Caco-2 (cell line): ENCODE measurements at regions of chr5 and their contacts with region 1.

Region 1: DNA sequence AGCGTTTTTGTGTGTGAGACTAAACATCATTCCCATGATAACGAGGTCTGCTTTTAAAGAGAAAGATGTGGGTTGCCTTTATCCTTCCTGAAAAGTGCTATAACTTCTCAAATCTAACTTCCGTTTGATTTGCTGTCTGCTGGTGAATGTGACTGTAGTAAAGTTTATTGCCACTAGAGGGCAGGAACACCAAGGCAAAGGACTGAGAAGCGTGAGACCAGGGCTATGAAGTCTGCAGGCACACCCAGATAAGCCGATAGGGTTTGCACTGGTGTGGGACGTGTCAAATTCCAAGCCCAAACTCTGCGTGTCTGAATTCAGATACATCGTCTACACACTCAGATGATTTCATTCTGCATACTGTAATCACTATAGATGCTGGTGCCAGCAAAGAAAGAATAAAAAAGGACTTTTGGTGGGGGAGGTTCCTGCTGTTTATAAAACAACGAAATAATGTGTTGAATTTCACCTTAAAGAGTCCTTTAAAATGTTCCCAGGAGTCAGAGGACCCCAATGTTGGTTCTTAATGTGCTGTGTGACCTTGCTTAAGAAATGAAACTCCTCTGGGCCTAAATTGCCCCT is 87.2 kb downstream of the PTTG1 start:
- DNase-seq: peak; percentile 75 to 82
- H3K4me3 ChIP-seq: no peak overlapping the region
- H3K4me3 Mint-ChIP-seq: no peak overlapping the region
- H3K27ac Mint-ChIP-seq: no peak overlapping the region
- H3K4me1 ChIP-seq: no peaks in the 10 kb centered on the region
- H3K4me1 Mint-ChIP-seq: no peaks in the 10 kb centered on the region
- H3K27me3 ChIP-seq: no peaks in the 10 kb centered on the region
- H3K27me3 Mint-ChIP-seq: peaks cover 3% of the 10 kb centered on the region
- CTCF ChIP-seq: peak; percentile 78 to 90

Region 2: DNA sequence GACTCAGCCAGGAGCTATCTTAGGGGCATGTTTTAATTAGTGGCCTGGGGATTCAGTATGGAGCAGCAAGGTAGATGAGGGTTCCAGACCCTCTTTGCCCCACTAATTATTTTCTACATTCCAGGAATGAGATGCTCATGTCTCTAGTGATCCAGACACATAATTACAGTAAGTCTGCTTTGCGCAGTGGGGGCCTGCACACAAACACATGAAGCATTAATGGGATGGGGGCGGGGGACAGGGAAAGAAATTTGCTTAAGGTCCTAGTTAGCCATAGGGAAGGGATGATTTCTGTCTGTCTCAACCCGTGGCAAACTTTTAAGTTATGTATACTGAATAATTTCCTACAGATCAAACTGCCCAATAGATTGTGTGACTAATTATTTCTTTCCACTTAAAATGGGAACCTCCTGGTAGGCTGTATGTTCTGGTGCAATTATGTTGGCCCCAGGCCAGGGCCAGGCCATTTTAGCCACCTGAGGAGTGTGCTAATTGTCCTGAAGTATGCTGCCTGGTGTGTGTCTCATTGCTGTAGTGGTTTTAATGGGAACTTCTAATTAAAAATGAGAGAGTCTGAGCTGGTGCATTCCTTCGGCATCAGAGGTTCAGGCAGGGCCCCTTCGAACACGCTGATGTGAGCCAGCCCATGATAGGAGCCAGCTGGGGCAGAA is 47.2 kb after region 1 on chr5:
- CTCF ChIA-PET with region 1: no interaction called
- POLR2A ChIA-PET with region 1: no interaction called
- intact Hi-C with region 1: loop called (anchors 2 kb)
- DNase-seq: no peak
- H3K4me3 ChIP-seq: no peak overlapping the region
- H3K4me3 Mint-ChIP-seq: no peak overlapping the region
- H3K27ac Mint-ChIP-seq: no peak overlapping the region
- H3K4me1 ChIP-seq: peaks cover 13% of the 10 kb centered on the region
- H3K4me1 Mint-ChIP-seq: peaks cover 8% of the 10 kb centered on the region
- H3K27me3 ChIP-seq: no peaks in the 10 kb centered on the region
- H3K27me3 Mint-ChIP-seq: no peaks in the 10 kb centered on the region
- CTCF ChIP-seq: no peak

Region 3: DNA sequence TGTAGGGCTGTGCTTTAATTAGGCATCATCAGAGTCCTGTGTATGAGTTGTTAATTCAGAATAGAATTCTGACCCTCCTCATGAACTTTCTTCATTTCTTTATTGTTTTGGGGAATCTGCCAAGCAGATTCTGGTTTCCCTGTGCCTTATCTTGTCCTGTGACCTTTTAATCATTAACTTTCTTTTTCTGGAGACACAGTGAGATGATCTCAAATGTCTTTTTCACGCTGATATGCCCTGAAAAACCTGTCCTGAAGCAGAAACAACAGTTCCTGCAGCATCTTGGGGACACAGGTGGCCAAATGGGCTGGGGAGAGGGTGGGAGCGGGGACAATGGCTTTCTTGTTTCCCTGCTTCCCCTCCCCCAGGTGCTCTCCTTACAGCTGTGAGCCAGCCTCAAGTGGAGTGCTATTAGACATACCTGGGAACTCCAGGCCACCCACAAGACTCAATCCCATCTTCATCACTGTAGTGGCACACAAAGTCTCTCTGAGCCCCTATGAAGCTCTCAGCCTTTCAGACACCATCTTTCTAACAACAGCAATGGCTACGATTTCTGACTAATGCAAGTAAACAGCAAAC is 129.4 kb after region 1 on chr5:
- CTCF ChIA-PET with region 1: no interaction called
- POLR2A ChIA-PET with region 1: no interaction called
- intact Hi-C with region 1: no loop called
- DNase-seq: no peak
- H3K4me3 ChIP-seq: no peak overlapping the region
- H3K4me3 Mint-ChIP-seq: no peak overlapping the region
- H3K27ac Mint-ChIP-seq: no peak overlapping the region
- H3K4me1 ChIP-seq: peaks cover 12% of the 10 kb centered on the region; the same call in 1 of the 2 replicates
- H3K4me1 Mint-ChIP-seq: peaks cover 20% of the 10 kb centered on the region
- H3K27me3 ChIP-seq: no peaks in the 10 kb centered on the region; the same call in 1 of the 2 replicates
- H3K27me3 Mint-ChIP-seq: no peaks in the 10 kb centered on the region
- CTCF ChIP-seq: no peak

Region 4: DNA sequence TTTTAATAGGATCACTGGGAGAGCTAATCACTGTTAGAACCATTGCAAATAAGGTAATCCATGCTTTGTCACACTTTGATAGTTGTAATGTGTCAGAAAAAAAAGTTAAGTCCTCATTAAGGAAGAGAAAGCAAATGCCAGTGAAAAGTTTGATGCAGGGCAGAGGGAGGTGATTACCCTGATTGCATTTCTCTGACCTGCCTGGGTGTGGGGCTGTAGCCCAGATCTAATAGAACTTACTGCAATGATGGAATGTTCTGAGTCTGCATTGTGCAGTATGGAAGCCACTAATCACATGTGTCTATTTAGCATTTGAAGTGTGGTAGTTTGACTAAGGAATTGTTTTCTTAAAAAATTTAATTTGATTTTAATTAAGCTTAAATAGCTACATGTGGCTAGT is 140.4 kb after region 1 on chr5:
- CTCF ChIA-PET with region 1: no interaction called
- POLR2A ChIA-PET with region 1: no interaction called
- intact Hi-C with region 1: loop called (anchors 5 kb)
- DNase-seq: peak in 1 of 2 experiments; percentile 23
- H3K4me3 ChIP-seq: no peak overlapping the region
- H3K4me3 Mint-ChIP-seq: no peak overlapping the region
- H3K27ac Mint-ChIP-seq: no peak overlapping the region
- H3K4me1 ChIP-seq: no peaks in the 10 kb centered on the region
- H3K4me1 Mint-ChIP-seq: no peaks in the 10 kb centered on the region
- H3K27me3 ChIP-seq: no peaks in the 10 kb centered on the region; the same call in 1 of the 2 replicates
- H3K27me3 Mint-ChIP-seq: peaks cover 4% of the 10 kb centered on the region
- CTCF ChIP-seq: peak in 1 of 2 experiments; percentile 30

Region 5: GRCh38 chr5:160675988-160676387 is 167.1 kb after region 1 on chr5:
- CTCF ChIA-PET with region 1: no interaction called
- POLR2A ChIA-PET with region 1: no interaction called
- intact Hi-C with region 1: loop called (anchors 1 kb)
- DNase-seq: peak in 1 of 2 experiments; percentile 26
- H3K4me3 ChIP-seq: no peak overlapping the region
- H3K4me3 Mint-ChIP-seq: no peak overlapping the region
- H3K27ac Mint-ChIP-seq: no peak overlapping the region
- H3K4me1 ChIP-seq: no peaks in the 10 kb centered on the region
- H3K4me1 Mint-ChIP-seq: no peaks in the 10 kb centered on the region
- H3K27me3 ChIP-seq: no peaks in the 10 kb centered on the region
- H3K27me3 Mint-ChIP-seq: peaks cover 3% of the 10 kb centered on the region
- CTCF ChIP-seq: peak in 1 of 2 experiments; percentile 47

Region 6: DNA sequence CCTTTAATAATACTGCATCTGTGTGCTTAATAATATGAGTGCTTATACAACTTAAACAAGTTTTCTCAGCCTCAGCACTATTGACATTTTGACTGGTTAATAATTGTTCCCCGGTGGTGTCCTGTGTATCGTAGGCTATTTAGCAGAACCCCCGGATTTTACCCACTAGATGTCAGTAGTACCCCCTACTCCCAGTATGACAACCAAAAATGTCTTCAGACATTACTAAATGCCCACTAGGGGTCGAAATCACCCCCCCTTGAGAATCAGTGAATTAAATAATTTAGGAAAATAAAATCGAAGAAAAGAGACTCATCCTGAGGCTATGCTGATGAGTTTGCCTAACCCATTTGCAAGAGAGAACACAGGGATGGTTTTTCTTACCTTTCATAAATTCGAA is 176.8 kb after region 1 on chr5:
- CTCF ChIA-PET with region 1: no interaction called
- POLR2A ChIA-PET with region 1: no interaction called
- intact Hi-C with region 1: loop called (anchors 1 kb)
- DNase-seq: peak in 1 of 2 experiments; percentile 66
- H3K4me3 ChIP-seq: no peak overlapping the region
- H3K4me3 Mint-ChIP-seq: no peak overlapping the region
- H3K27ac Mint-ChIP-seq: no peak overlapping the region
- H3K4me1 ChIP-seq: no peaks in the 10 kb centered on the region
- H3K4me1 Mint-ChIP-seq: peaks cover 8% of the 10 kb centered on the region
- H3K27me3 ChIP-seq: no peaks in the 10 kb centered on the region
- H3K27me3 Mint-ChIP-seq: no peaks in the 10 kb centered on the region
- CTCF ChIP-seq: peak; percentile 76 to 79

Region 7: GRCh38 chr5:160787240-160787639 is 278.4 kb after region 1 on chr5:
- CTCF ChIA-PET with region 1: no interaction called
- POLR2A ChIA-PET with region 1: no interaction called
- intact Hi-C with region 1: loop called (anchors 1 kb)
- DNase-seq: peak; percentile 37 to 40
- H3K4me3 ChIP-seq: no peak overlapping the region
- H3K4me3 Mint-ChIP-seq: no peak overlapping the region
- H3K27ac Mint-ChIP-seq: no peak overlapping the region
- H3K4me1 ChIP-seq: no peaks in the 10 kb centered on the region
- H3K4me1 Mint-ChIP-seq: peaks cover 9% of the 10 kb centered on the region
- H3K27me3 ChIP-seq: no peaks in the 10 kb centered on the region
- H3K27me3 Mint-ChIP-seq: peaks cover 3% of the 10 kb centered on the region
- CTCF ChIP-seq: peak; percentile 54 to 67